ENCODE measurements at regions of chr1 and their contacts with region 1.

Region 1: GRCh38 chr1:24201941-24202440 is 14.9 kb upstream of the IFNLR1 start:
- DNase-seq: peak; percentile 53
- H3K4me3 ChIP-seq: no peak overlapping the region
- CTCF ChIP-seq: peak; percentile 84

Region 2: GRCh38 chr1:23995431-23995837 is 206.6 kb before region 1 on chr1:
- CTCF ChIA-PET with region 1: no interaction called
- POLR2A ChIA-PET with region 1: no interaction called
- DNase-seq: no peak
- H3K4me3 ChIP-seq: no peak overlapping the region
- CTCF ChIP-seq: no peak

Region 3: DNA sequence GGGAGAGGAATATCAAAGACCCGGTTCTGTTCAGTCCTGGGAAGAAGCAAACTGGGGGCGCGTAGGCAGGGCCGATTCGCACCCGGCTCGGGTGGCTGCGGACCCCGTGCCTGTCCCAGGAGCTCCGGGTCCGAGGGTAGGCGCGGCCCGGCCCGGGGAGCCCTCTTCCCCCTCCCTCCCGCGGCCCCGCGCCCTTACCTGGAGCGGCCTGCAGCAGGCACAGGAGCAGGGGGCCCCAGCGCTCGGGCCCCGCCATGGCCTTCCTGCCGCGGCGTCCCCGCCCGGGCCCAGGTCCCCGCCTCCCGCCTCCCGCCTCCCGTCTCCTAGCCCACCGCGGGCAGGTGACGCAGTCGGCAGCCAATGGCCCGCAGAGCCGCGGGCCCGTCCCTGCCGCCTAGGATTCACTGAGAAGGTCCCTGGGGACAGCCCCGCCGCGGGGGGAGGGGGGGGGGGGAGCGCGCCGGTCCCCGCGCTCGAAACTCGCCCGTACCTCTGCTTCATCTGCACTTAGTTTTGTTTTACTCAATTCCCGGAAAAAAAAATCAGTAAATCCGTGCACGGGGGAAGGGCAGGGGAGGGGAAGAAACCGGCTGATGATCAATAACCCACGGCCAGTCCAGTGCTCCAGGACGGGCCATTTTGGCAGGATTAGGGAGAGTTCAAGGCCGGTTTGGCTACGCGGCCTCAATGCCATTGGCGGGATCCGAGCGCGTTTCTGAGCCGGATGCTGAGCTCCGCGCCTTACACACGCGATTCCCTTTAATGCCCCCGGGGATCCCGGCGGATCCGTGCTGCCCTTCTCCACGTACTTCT is 14.8 kb before region 1 on chr1 and contains the start of gene IFNLR1:
- CTCF ChIA-PET with region 1: interaction called, 79 read pairs
- POLR2A ChIA-PET with region 1: no interaction called
- DNase-seq: no peak
- H3K4me3 ChIP-seq: peak within 1 kb of the TSS; percentile 48
- CTCF ChIP-seq: no peak

Region 4: GRCh38 chr1:24321697-24322469 is 119.9 kb after region 1 on chr1:
- CTCF ChIA-PET with region 1: interaction called, 10 read pairs
- POLR2A ChIA-PET with region 1: no interaction called
- DNase-seq: peak; percentile 29
- H3K4me3 ChIP-seq: peak overlapping the region; percentile 53
- CTCF ChIP-seq: no peak

Region 5: DNA sequence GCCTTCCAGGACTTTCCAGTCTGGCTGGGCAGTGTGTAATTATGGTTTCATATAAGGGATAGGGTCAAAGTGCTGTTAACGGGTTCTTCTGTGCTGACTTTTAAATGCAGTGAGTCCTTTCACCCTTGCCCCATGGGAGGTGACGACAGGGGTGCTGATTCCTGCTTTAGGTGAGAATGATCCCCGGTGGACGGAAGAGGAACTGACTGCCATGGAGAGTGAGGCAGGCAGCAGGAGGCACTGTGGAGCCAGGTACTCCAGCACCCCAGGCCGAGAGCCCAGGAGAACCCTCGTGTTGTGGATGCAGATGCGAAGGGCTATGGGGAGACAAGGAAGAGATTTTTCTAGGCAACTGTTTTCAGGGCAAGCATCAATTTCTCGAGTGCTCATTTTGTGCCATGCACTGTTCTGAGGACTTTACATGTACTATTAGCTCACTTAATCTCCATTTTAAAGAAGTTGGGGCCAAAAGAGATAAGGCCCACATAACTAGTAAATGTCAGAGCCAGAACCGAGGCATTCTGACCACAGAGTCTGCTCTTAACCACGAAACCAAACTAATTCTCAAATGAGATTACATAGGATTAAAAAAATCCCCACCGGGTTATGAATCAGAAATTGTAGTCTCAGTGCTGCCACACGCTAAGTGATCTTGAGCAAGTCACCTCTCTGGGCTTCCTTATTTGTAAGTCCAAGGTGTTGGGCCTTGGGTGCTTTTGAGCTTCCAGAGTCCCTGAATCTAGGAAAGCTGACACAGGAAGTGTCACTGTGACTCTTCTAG is 183.4 kb after region 1 on chr1:
- CTCF ChIA-PET with region 1: interaction called, 847 read pairs
- POLR2A ChIA-PET with region 1: no interaction called
- DNase-seq: no peak
- H3K4me3 ChIP-seq: no peak overlapping the region
- CTCF ChIP-seq: peak; percentile 48

Region 6: DNA sequence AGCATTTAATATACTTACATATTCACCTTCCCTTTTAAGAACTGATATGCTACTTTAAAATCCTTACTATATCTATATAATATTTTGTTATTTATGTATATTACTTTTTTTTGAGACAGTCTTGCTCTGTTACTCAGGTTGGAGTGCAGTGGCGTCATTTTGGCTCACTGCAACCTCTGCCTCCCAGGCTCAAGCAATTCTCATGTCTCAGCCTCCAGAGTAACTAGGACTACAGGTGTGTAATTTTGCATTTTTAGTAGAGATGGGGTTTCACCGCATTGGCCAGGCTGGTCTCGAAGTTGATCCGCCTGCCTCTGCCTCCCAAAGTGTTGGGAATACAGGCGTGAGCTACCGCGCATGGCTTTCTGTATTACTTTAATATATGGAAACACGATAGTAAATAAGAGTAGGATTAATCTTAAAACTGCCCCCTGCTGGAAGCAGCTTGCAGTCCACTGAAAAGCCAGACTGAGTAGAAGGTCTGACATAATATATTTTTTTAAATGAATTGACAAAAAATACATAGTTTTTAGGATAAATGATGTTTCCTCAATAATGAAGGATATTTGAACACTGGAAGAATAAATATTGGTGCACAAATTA is 325.1 kb after region 1 on chr1:
- CTCF ChIA-PET with region 1: interaction called, 70 read pairs
- POLR2A ChIA-PET with region 1: no interaction called
- DNase-seq: no peak
- H3K4me3 ChIP-seq: no peak overlapping the region
- CTCF ChIP-seq: peak; percentile 13